Activated naive CD4-positive, alpha-beta T cell treated with anti-CD3 and anti-CD28 coated beads for 36 hours (primary cell): ENCODE measurements at regions of chr16 and their contacts with region 1.

Region 1: DNA sequence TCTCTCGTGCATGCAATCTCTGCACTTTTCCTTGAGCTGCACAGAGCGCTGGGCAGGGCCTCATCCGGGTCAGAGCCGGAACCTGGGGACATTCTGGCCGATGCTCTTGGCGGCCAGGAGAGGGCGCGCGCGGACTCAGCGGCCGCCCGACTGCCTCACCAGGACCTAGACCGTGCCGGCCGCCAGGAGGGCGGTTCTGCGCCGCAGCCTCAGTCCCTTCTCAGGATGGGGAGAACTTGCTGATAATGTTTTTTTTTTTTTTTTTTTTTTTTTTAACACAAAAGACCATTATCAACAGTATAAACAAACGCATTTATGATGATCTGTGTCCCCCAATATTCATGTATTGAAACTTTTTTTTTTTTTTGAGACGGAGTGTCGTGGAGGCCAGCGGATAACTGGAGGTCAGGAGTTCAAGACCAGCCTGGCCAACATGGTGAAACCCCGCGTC is 8.1 kb upstream of the FLYWCH2 start:
- DNase-seq: peak; percentile 72
- H3K4me3 Mint-ChIP-seq: no peak overlapping the region
- H3K27ac Mint-ChIP-seq: no peak overlapping the region
- H3K4me1 Mint-ChIP-seq: no peaks in the 10 kb centered on the region
- H3K27me3 Mint-ChIP-seq: no peaks in the 10 kb centered on the region

Region 2: DNA sequence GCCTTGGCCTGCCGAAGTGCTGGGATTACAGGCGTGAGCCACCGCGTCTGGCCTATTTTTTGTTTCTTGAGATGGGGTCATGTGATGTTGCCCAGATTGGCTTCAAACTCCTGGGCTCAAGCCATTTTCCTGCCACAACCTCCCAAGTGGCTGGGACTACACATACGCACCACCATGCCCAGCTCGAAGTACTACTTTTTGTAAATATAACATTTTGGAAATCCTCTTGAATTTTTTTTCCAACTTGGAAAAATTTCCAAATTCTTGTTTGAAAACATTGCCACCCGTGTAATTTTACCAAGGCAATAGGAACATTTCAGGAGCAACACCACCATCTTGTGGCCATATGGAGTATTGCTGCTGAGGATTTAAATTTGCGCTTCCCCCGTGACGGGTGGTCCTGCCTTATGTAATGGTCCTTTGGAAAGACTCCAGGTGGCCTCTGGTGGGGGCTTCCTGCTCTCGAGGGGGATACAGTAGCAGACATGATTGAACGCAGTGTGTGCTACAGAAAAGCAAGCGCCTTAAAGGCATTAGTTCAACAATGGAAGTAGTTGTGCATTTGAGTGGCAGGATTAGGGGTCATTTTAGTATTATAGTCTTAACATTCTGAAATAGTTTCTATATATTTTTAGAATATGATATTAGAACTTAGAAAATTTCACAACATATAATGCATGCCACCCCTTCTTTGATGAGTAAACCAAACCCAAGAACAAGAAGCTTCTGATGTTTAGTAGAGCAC is 44.7 kb after region 1 on chr16:
- CTCF ChIA-PET with region 1: interaction called, 8 read pairs
- intact Hi-C with region 1: loop called (anchors 1 kb)
- DNase-seq: peak; percentile 74
- H3K4me3 Mint-ChIP-seq: no peak overlapping the region
- H3K27ac Mint-ChIP-seq: peak overlapping the region; percentile 56
- H3K4me1 Mint-ChIP-seq: peaks cover 14% of the 10 kb centered on the region
- H3K27me3 Mint-ChIP-seq: no peaks in the 10 kb centered on the region

Region 3: GRCh38 chr16:2926650-2927646 is 52.0 kb after region 1 on chr16:
- CTCF ChIA-PET with region 1: interaction called, 12 read pairs
- intact Hi-C with region 1: loop called (anchors 2 kb)
- DNase-seq: peak; percentile 95
- H3K4me3 Mint-ChIP-seq: no peak overlapping the region
- H3K27ac Mint-ChIP-seq: no peak overlapping the region
- H3K4me1 Mint-ChIP-seq: peaks cover 9% of the 10 kb centered on the region
- H3K27me3 Mint-ChIP-seq: no peaks in the 10 kb centered on the region